AG04449 (cell line): ENCODE measurements at regions of chr11 and their contacts with region 1.

Region 1: GRCh38 chr11:1546536-1547400 is 25.3 kb downstream of the DUSP8 start:
- DNase-seq: no peak
- H3K4me3 ChIP-seq: peak overlapping the region; percentile 33; the same call in 1 of the 2 replicates
- CTCF ChIP-seq: peak; percentile 68

Region 2: GRCh38 chr11:1401656-1402221 is 145.0 kb before region 1 on chr11:
- CTCF ChIA-PET with region 1: no interaction called
- POLR2A ChIA-PET with region 1: no interaction called
- DNase-seq: no peak
- H3K4me3 ChIP-seq: no peak overlapping the region
- CTCF ChIP-seq: no peak

Region 3: DNA sequence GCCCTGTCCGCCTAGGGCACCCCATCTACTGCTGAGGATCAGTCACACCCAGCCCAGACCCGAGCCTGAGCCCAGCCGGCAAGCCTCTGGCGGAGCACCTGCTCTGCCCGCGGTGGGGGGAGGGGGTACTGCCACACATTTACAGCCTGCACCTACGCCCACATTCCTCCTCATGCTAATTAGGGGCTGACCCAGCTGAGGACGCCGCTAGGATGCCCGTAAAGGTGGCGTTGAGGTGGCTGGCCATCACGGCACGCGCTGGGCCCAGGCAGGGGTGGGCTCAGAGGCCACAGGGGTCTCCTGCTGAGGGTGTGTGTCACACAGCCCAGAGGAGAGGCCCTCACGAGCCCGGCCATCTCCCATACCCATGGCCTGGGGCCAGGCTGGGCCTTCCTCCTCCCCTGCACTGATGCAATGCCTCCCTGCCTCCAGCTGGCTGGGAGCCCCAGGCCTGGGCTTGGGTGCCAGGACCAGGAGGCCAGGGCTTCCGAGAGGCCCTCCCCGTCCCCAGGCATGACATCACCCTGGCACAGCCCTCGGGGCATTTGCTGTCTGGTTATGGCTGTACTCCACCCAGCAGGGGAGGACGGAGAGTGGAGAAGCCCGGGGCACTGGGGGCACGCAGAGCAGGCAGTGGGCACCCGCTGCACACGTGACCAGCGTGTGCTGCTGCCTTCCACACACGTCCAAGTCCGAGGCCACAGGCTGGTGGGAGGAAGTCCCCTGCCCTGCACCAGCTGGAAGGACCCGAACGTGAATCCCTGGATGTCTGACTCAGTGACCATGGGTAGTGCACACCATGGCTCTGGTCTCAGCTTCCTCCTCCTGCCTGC is 12.6 kb after region 1 on chr11:
- CTCF ChIA-PET with region 1: interaction called, 47 read pairs
- POLR2A ChIA-PET with region 1: interaction called, 4 read pairs
- DNase-seq: peak; percentile 34
- H3K4me3 ChIP-seq: no peak overlapping the region
- CTCF ChIP-seq: no peak

Region 4: DNA sequence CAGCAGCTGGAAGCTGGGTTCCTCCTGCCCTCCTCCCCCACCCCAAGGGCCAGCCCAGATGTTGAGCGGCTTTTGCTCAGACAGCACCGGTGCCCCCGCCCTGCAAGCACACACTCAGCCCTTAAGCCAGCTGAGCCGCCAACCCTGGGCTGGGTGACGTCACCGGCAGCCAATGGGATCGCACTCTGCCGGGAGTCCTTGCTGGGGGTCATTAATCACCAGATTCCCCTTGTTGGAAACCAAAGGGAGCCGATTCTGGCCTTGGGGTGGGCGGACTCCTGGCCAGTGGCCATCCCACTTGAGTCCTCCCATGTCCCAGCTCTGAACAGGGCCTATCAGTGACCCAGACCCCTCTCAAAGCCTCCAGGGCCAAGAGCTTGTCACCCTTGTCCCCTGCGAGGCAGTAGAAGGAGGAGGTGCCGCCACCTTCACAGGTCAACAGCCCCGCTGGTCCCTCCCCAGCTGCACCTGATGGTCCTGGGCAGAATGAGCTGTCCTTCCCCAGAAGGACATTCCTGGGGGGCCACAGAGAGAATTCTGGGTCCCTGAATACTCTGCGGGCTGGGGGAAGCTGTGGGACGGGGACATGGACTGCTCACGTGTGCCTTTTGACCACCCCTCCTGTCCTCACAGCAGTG is 17.9 kb after region 1 on chr11:
- CTCF ChIA-PET with region 1: interaction called, 47 read pairs
- POLR2A ChIA-PET with region 1: interaction called, 3 read pairs
- DNase-seq: peak; percentile 31
- H3K4me3 ChIP-seq: no peak overlapping the region
- CTCF ChIP-seq: no peak

Region 5: GRCh38 chr11:1572197-1573076 is 25.7 kb after region 1 on chr11 and contains the start of gene DUSP8:
- CTCF ChIA-PET with region 1: interaction called, 266 read pairs
- POLR2A ChIA-PET with region 1: interaction called, 3 read pairs
- DNase-seq: no peak
- H3K4me3 ChIP-seq: peak within 1 kb of the TSS; percentile 63
- CTCF ChIP-seq: no peak

Region 6: GRCh38 chr11:1628506-1629325 is 81.9 kb after region 1 on chr11:
- CTCF ChIA-PET with region 1: interaction called, 29 read pairs
- POLR2A ChIA-PET with region 1: no interaction called
- DNase-seq: no peak
- H3K4me3 ChIP-seq: no peak overlapping the region
- CTCF ChIP-seq: peak; percentile 95